ENCODE measurements at regions of chr10 and their contacts with region 1.

Region 1: DNA sequence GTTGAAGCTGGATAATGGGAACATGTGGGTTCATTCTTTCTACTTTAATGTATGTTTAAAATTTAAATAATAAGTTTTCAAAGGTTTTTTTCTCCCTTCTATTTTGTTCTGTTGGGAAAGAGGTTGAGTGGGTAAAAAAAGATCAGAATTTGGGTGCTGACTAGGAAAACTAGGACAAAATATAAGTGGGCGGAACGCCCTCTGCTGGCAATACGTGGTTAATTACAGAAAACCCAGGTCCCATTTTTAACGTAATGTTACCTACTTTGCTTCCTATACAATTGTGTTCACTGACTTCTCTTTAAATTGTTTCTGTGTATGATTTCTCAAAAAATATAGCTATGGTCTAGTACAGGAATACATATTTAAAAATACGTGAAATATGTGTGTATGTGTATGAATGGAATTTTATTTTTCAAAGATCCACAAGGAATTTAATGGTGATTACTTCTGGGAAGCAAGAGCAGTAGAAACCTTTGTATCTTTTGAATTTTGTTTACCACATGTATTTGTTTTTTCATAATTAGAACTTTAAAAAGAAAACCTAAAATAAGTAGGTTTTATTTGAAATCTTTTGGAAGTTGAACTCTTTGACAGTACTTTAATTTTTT is 8.7 kb downstream of the ECD start:
- DNase-seq: peak; percentile 30
- H3K4me3 ChIP-seq: no peak overlapping the region
- H3K27ac ChIP-seq: no peak overlapping the region
- H3K4me1 ChIP-seq: no peaks in the 10 kb centered on the region
- H3K27me3 ChIP-seq: no peaks in the 10 kb centered on the region
- CTCF ChIP-seq: peak; percentile 70 to 72

Region 2: DNA sequence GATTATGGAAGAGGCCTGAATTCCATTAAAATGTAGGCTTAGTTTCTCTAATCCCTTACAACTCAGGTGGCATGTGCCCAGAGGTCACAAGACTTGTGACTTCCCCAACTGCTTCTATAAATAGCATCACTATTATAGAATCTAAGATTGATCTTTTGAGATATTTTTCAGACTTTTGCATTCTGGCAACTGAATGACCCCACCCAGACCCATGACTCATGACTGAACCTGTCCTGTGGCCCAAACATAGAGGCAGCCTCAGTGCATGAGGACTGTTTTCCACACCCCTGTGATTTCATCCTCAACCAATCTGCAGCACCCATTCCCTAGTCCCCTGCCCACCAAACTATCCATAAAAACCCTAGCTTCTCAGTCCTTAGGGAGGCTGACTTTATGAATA is 617.9 kb before region 1 on chr10:
- CTCF ChIA-PET with region 1: interaction called, 12 read pairs
- dilution Hi-C with region 1: no loop called
- in situ Hi-C with region 1: no loop called
- intact Hi-C with region 1: no loop called
- DNase-seq: no peak
- H3K4me3 ChIP-seq: no peak overlapping the region
- H3K27ac ChIP-seq: no peak overlapping the region
- H3K4me1 ChIP-seq: peaks cover 7% of the 10 kb centered on the region
- H3K27me3 ChIP-seq: no peaks in the 10 kb centered on the region
- CTCF ChIP-seq: no peak